Activated CD4-positive, alpha-beta memory T cell treated with anti-CD3 and anti-CD28 coated beads, Interleukin-2, amount 10 ng/mL, durations not matched to agents 7 days and 5 days (primary cell): ENCODE measurements at regions of chr10 and their contacts with region 1.

Region 1: DNA sequence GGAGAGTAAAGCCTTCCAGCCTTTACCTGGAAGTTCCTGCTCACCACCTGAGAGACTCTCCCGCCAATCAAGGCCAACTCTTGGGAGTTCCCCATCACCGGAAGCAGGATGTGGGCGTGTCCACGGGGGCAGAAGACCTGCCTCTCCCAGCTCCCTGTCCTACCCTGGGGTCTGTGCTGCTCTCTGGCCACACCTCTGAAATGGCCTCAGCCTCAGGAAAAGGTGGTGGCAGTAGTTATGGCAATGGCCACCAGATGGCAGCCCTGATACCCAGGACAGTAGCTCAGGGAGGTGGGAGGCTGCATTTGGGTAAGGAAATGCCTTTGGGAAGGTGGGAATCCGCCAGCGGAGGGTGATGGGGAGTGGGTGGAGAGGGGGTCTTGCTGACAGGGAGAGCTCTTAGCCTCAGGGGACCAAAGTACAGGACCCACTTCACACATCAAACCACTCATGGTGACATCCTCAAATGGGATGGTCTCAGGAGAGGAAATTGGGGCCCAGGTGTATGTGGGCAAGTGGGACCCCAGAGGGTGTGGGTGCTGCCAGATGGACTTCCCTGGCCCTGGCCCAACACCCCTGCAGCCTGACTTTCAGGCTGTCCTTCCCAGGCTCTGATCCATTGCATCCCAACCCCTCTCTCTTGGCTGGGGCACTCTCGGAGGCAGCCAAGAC is 33.9 kb downstream of the KAZALD1 start:
- DNase-seq: peak; percentile 78
- H3K4me3 Mint-ChIP-seq: no peak overlapping the region
- H3K27ac Mint-ChIP-seq: no peak overlapping the region
- H3K4me1 Mint-ChIP-seq: no peaks in the 10 kb centered on the region
- H3K27me3 Mint-ChIP-seq: peaks cover 21% of the 10 kb centered on the region

Region 2: DNA sequence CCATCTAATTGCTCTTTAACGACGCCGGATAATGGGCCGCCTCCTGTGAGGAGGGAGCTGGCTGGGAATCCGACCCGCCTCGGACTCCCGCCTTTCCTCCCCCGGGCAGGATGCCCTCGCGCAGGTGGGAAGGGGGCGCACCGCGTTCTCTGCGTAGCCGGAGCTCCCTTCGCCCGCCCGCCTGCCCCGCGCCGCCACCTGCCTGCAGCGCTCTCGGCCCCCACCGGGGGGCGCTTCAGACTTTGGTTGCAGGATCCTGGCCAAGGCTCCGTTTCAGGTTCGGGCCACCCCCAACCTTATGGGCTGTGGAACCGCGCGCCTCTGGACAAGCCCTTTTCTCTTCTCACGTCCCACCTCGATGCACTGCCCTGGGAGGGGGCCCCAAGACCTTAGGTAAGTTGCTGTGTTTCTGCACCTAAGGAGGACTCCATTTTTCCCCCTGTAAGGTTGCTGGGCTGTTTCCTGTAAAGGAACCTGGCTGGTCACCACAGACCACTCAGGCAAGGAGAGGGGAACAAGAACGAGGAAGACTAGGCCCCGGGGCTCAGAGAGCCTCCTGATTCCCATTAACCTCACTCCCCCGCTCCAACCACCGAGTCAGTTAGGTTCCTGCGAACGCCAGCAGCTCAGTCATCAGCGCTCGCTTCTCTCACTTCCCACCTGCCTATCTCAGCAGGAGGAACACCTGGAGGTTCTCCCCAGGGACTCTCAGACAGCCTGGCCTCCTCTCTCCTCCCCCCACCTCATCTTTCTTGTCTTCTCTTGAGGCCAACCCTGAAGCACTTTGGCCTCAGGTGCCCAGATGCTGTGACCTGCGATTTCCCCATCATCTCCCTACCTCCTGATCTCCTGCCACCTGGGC is 45.2 kb before region 1 on chr10:
- CTCF ChIA-PET with region 1: interaction called, 14 read pairs
- POLR2A ChIA-PET with region 1: no interaction called
- DNase-seq: peak; percentile 83
- H3K4me3 Mint-ChIP-seq: no peak overlapping the region
- H3K27ac Mint-ChIP-seq: no peak overlapping the region
- H3K4me1 Mint-ChIP-seq: peaks cover 32% of the 10 kb centered on the region
- H3K27me3 Mint-ChIP-seq: peaks cover 41% of the 10 kb centered on the region

Region 3: DNA sequence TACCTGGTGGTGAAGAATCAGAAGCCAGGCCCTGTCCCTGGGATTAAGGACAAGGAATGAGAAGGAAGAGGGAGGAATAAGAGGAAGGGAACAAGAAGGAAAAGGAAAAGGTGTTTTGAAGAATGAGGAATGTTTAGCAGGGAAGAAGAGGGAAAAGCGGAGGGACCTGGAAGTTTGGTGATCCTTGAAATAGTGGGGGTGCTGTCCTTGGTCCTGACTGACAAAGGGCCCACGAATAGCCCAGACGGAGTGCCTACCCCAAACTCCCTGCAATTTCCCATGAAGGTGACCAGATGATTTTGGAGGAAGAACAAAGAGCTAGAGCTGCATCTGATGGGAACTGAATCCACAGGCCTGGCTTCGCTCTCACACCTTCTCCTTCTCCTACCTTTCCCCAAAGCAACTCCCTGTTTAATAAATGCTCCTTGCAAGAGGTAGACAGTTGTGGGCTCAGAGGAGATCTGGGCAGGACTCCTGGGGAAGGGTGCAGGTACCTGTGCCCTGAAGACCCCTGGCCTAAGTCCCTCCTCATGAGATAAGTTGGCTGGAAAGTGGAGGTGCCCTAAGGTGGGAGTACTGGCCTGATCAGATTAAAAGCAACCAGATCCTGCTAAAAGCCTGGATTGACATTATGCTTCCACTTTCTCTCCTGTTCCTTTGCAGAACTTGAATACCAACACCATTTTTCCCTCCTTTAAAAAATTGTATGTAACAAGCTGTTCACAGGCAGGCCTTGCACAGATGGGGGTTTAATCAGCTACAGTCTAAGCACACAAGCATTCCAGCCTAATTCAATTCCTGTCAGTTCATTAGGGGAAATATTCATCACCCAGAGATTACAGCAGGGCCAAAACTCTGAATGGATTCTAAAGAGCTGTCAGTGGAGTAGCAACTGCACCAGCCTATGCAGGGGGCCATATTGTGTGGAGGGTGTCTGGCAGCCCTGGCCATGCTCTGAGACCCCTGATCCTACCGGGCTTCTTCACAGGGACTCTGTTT is 14.4 kb before region 1 on chr10:
- CTCF ChIA-PET with region 1: interaction called, 21 read pairs
- POLR2A ChIA-PET with region 1: no interaction called
- DNase-seq: no peak
- H3K4me3 Mint-ChIP-seq: no peak overlapping the region
- H3K27ac Mint-ChIP-seq: no peak overlapping the region
- H3K4me1 Mint-ChIP-seq: no peaks in the 10 kb centered on the region
- H3K27me3 Mint-ChIP-seq: peaks cover 34% of the 10 kb centered on the region

Region 4: GRCh38 chr10:101291331-101292193 is 195.9 kb after region 1 on chr10:
- CTCF ChIA-PET with region 1: no interaction called
- POLR2A ChIA-PET with region 1: no interaction called
- DNase-seq: peak; percentile 33
- H3K4me3 Mint-ChIP-seq: peak overlapping the region; percentile 24
- H3K27ac Mint-ChIP-seq: no peak overlapping the region
- H3K4me1 Mint-ChIP-seq: peaks cover 6% of the 10 kb centered on the region
- H3K27me3 Mint-ChIP-seq: peaks cover 72% of the 10 kb centered on the region